HCT116 (cell line): ENCODE measurements at regions of chr9 and their contacts with region 1.

Region 1: GRCh38 chr9:14353222-14354056 is 39.5 kb upstream of the NFIB start:
- DNase-seq: peak; percentile 50
- ATAC-seq: peak; percentile 97
- H3K4me3 ChIP-seq: no peak overlapping the region
- H3K27ac ChIP-seq: no peak overlapping the region
- H3K4me1 ChIP-seq: no peaks in the 10 kb centered on the region
- H3K27me3 ChIP-seq: no peaks in the 10 kb centered on the region
- CTCF ChIP-seq: peak; percentile 48 to 88 (median 87); a peak in 5 of 6 replicates
- POLR2A ChIP-seq: no peak
- RAD21 ChIP-seq: peak; percentile 84

Region 2: DNA sequence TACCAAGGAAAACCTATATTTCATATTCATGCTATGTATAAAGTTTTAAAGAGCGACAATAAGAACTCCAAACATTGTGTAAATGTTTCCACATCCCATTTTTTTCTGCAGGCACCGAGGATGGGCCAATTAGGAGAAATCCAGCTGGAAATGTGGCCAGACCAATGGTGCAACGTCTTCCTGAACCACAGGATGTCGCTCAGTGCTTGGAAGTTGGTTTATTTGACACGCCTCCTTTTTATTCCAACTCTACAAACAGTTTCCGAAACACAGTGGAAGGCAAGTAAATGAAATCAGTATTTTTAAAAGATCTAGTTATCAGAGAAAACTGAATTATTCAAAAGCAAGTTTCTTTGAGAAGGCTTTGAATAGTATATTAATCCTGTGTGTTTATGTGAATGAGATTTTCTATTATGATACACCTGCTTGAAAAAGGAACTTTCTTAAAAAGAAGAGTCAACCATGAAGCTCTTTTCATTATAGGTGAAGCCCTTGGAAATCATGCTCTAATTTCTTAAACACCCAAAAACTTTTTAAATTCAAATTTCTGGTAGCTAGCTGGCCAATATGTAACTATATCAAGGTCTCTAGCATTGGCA is 1651.2 kb before region 1 on chr9:
- CTCF ChIA-PET with region 1: no interaction called
- POLR2A ChIA-PET with region 1: no interaction called
- RAD21 ChIA-PET with region 1: no interaction called
- intact Hi-C with region 1: loop called (anchors 5 kb)
- DNase-seq: peak; percentile 56
- ATAC-seq: peak; percentile 91
- H3K4me3 ChIP-seq: no peak overlapping the region
- H3K27ac ChIP-seq: no peak overlapping the region
- H3K4me1 ChIP-seq: no peaks in the 10 kb centered on the region
- H3K27me3 ChIP-seq: 0 out of 2 replicates have a peak, but pooled peaks cover 4% of the 10 kb centered on the region
- CTCF ChIP-seq: peak; percentile 59 to 77 (median 59); a peak in 5 of 6 replicates
- POLR2A ChIP-seq: no peak
- RAD21 ChIP-seq: peak; percentile 82

Region 3: DNA sequence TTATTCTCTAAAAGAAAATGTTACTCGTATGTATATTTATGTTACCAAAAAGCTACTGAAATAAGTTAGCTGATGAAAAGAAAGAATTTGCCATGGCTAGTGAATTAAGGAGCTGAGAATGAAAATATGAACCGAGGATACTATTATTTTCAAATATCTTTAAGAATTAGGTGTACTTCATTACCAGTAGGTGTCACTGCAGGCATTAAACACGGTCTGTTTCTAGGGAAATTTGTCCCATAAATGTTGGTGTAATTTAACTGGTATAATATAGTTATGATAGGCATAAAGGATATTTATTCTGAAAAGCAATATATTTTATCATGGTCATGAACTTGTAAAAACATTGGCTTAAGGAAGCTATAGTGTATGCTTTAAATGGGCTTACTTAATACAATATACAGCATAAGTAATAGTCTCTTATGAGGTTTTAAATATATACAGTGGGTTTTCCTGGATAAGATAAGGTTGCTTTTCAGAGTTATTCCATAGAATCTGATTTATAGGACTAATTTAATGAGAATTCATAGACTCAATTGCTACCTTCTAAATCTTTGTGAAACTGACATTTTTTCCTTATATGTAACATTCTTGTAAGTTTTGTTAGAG is 1001.6 kb before region 1 on chr9:
- CTCF ChIA-PET with region 1: interaction called, 4 read pairs
- POLR2A ChIA-PET with region 1: no interaction called
- RAD21 ChIA-PET with region 1: no interaction called
- intact Hi-C with region 1: loop called (anchors 1 kb)
- DNase-seq: peak; percentile 7
- ATAC-seq: peak; percentile 49; the same call in 1 of the 2 replicates
- H3K4me3 ChIP-seq: no peak overlapping the region
- H3K27ac ChIP-seq: no peak overlapping the region
- H3K4me1 ChIP-seq: no peaks in the 10 kb centered on the region
- H3K27me3 ChIP-seq: no peaks in the 10 kb centered on the region
- CTCF ChIP-seq: peak; percentile 15 to 54 (median 36); a peak in 4 of 6 replicates
- POLR2A ChIP-seq: no peak
- RAD21 ChIP-seq: peak; percentile 49

Region 4: GRCh38 chr9:13427587-13427986 is 925.9 kb before region 1 on chr9:
- CTCF ChIA-PET with region 1: interaction called, 45 read pairs
- POLR2A ChIA-PET with region 1: no interaction called
- RAD21 ChIA-PET with region 1: interaction called in 1 of 2 experiments, 5 read pairs
- intact Hi-C with region 1: loop called (anchors 1 kb)
- DNase-seq: no peak
- ATAC-seq: no peak
- H3K4me3 ChIP-seq: no peak overlapping the region
- H3K27ac ChIP-seq: no peak overlapping the region
- H3K4me1 ChIP-seq: no peaks in the 10 kb centered on the region
- H3K27me3 ChIP-seq: no peaks in the 10 kb centered on the region
- CTCF ChIP-seq: peak; percentile 33 to 69 (median 47); a peak in 5 of 6 replicates
- POLR2A ChIP-seq: no peak
- RAD21 ChIP-seq: peak; percentile 62

Region 5: DNA sequence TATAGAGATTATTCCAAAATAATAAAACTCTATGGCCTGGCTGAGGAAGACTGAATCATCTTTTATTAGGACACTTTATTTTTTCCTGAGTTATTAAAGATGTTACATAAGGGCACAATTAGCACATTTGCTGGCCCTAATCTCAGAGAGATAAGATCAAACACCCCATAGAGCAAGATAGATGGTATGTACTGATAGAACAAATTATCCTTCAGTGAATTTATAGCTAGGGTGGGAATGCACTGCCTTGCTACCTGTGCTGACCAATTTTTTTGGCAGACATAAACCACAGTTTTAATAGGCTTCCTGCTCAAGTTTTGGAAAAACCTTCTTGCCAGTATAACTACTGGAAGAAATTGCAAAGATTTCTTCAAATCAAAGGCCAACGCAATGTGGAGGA is 706.9 kb before region 1 on chr9:
- CTCF ChIA-PET with region 1: no interaction called
- POLR2A ChIA-PET with region 1: no interaction called
- RAD21 ChIA-PET with region 1: no interaction called
- intact Hi-C with region 1: no loop called
- DNase-seq: no peak
- ATAC-seq: no peak
- H3K4me3 ChIP-seq: no peak overlapping the region
- H3K27ac ChIP-seq: no peak overlapping the region
- H3K4me1 ChIP-seq: no peaks in the 10 kb centered on the region
- H3K27me3 ChIP-seq: no peaks in the 10 kb centered on the region
- CTCF ChIP-seq: no peak
- POLR2A ChIP-seq: no peak
- RAD21 ChIP-seq: no peak

Region 6: DNA sequence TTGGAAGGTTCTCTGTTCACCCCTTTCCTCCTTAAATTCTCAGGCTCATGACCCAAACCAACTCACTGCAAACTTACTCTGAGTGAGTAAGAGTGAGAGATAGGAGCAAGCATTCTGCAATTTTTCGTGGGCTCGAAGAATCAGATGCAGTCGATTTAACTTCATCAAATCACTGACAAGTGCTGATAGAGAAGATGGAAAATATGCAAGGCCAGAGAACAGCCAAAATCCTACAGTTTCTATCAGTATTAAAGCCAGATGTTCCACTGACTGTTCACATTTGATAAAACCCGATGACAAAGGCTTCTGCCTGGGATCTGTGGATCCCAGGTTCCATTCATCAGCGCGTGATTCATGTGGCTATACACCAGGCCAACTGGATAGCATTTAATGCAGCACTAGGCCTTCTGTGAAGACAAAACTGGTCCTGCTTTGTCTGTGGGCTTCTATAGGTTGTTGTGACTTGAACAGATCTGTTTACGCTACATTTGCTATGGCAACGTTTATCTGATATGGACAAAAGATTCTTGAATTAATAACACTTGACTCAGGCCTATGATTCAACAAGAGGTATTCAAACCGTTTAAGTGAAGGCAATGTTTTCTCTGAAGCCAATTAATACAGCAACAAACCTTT is 290.7 kb before region 1 on chr9:
- CTCF ChIA-PET with region 1: no interaction called
- POLR2A ChIA-PET with region 1: no interaction called
- RAD21 ChIA-PET with region 1: no interaction called
- intact Hi-C with region 1: loop called (anchors 10 kb)
- DNase-seq: no peak
- ATAC-seq: no peak
- H3K4me3 ChIP-seq: no peak overlapping the region
- H3K27ac ChIP-seq: no peak overlapping the region
- H3K4me1 ChIP-seq: no peaks in the 10 kb centered on the region
- H3K27me3 ChIP-seq: no peaks in the 10 kb centered on the region
- CTCF ChIP-seq: no peak
- POLR2A ChIP-seq: no peak
- RAD21 ChIP-seq: no peak

Region 7: DNA sequence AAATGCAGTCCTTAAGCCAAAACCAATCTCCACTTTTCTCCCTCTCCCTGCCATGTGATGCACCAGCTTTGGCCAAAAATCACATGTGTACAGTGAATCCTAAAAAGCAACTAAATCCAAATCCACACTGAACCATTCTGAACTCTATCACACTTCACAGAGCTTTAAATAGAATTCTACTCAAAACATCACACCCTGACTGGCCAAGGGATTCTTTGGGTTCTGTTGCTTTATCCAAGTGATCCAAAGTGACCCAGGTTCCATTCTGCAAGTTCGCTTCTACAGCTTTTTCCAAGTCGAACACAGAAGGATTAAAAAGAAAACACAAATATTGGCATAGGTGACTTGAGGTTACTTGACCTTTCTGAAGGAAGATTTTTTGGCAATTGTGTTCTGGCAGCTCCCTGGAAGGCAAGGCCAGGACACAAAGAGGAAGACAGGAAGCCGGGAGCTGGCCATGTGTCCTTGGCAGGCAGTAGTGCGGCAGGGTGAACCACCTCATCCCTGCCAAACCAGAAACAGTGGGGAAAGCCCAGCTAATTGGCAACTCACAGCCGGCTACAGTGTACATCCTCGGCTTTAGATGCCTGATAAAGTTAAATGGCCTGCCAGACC is 154.5 kb before region 1 on chr9:
- CTCF ChIA-PET with region 1: no interaction called
- POLR2A ChIA-PET with region 1: no interaction called
- RAD21 ChIA-PET with region 1: no interaction called
- intact Hi-C with region 1: no loop called
- DNase-seq: no peak
- ATAC-seq: no peak
- H3K4me3 ChIP-seq: no peak overlapping the region
- H3K27ac ChIP-seq: no peak overlapping the region
- H3K4me1 ChIP-seq: no peaks in the 10 kb centered on the region
- H3K27me3 ChIP-seq: no peaks in the 10 kb centered on the region; the same call in 1 of the 2 replicates
- CTCF ChIP-seq: no peak
- POLR2A ChIP-seq: no peak
- RAD21 ChIP-seq: no peak